CD8-positive, alpha-beta T cell (primary cell): ENCODE measurements at regions of chr2 and their contacts with region 1.

Region 1: DNA sequence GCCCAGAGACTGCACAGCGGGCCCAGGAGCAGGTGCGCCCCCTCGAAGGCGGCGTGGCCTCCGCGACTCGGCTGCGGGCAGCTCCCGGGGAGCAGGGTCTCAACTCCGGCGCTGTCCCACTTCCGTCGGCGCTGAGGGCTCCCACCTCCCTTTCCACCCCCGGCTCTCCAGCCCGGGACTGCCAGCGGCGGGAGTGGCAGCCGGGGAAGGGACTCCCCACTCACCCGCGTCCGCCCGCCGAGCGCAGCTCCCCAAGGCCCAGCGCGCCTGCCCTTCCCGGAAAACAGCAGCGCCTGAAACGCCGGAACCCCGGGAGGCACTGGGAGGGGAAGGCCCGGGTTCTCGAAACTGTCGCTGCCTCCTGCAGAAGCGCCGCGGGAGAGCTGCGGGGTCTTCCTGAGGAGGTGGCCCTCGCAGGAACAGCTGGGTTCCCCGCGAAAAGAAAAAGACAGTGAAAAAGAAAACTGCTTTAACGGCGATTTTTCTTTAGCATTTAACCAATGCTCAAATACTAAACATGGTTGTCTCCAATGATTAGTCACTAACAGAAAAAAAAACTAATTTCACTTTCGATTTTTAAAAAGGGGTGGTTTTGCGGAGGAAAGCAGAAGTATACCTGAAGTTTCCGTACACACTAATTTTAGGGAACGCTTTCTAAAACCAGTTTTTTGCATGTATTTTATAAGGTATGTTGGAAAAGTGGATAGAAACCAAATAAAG is at the start of gene NMI:
- DNase-seq: peak; percentile 30 to 82 (median 64)
- ATAC-seq: peak; percentile 68
- H3K4me3 ChIP-seq: peak within 1 kb of the TSS; percentile 89 to 92
- H3K4me3 Mint-ChIP-seq: peak within 1 kb of the TSS; percentile 95
- H3K27ac ChIP-seq: peak within 1 kb of the TSS; percentile 92 to 97
- H3K27ac Mint-ChIP-seq: peak within 1 kb of the TSS; percentile 99
- H3K4me1 ChIP-seq: peaks cover 31% of the 10 kb centered on the region
- H3K4me1 Mint-ChIP-seq: peaks cover 46% of the 10 kb centered on the region
- H3K27me3 ChIP-seq: no peaks in the 10 kb centered on the region
- H3K27me3 Mint-ChIP-seq: no peaks in the 10 kb centered on the region
- CTCF ChIP-seq: no peak
- total RNA-seq, gene NMI: 16.9 to 18.0 TPM

Region 2: DNA sequence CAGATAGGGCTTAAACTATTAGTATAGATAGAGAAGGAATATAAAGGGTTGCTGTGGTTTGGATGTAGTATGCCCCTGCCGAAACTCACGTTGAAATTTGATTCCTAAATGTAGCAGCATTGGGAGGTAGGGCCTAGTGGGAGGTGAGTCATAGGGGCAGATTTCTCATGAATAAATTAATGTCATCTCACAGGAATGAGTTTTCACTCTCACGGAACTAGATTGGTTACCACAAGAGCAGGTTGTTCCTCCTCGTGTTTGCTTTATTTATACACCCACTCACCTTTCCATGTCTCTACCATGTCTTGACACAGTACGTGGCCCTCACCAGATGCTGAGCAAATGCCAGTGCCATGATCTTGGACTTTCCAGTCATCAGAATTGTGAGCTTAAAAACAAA is 246.0 kb before region 1 on chr2:
- CTCF ChIA-PET with region 1: no interaction called
- POLR2A ChIA-PET with region 1: no interaction called
- intact Hi-C with region 1: no loop called
- DNase-seq: no peak
- ATAC-seq: no peak
- H3K4me3 ChIP-seq: no peak overlapping the region
- H3K4me3 Mint-ChIP-seq: no peak overlapping the region
- H3K27ac ChIP-seq: no peak overlapping the region
- H3K27ac Mint-ChIP-seq: no peak overlapping the region
- H3K4me1 ChIP-seq: no peaks in the 10 kb centered on the region
- H3K4me1 Mint-ChIP-seq: no peaks in the 10 kb centered on the region
- H3K27me3 ChIP-seq: no peaks in the 10 kb centered on the region
- H3K27me3 Mint-ChIP-seq: peaks cover 12% of the 10 kb centered on the region
- CTCF ChIP-seq: no peak

Region 3: DNA sequence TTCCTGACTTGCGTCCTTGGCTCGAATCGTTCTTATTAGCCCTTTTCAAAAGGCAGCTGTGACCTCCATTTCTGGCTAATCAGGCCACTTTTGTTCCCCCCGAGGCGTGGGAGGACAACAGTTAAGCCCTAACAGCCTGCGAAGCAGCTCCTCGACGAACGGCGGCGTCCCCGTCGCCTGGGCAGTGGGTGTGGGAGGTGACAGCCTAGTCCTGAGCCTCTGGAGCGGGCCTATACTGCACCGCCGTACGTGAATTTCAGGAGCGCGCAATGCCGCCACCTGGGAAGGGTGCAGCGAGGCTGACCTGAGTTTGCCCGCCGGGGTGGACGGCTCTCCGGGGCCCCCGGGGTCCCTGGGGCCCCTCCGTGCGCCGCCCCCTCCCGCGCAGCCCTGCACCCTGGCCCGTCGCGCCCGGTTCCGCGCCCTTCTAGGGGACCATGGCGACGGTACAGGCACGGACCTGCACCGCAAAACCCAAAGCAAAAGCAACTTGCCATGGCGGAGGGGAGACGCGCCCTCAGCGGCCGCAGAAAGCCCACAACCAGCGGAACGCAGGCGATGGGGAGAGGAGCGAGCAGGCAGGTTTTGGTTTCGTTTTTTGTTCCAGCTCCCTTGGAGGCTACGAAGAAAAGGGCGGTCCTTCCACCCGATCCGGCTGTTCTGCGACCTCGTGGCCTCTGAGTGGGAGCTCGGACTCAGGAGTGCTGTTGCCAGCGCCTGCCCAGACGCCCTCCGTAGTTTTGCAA is 28.1 kb before region 1 on chr2 and contains the start of gene RBM43:
- CTCF ChIA-PET with region 1: interaction called, 3 read pairs
- POLR2A ChIA-PET with region 1: interaction called, 52 read pairs
- intact Hi-C with region 1: loop called (anchors 1 kb)
- DNase-seq: peak; percentile 60 to 94 (median 82)
- ATAC-seq: peak; percentile 87
- H3K4me3 ChIP-seq: peak within 1 kb of the TSS; percentile 68
- H3K4me3 Mint-ChIP-seq: peak within 1 kb of the TSS; percentile 90
- H3K27ac ChIP-seq: peak within 1 kb of the TSS; percentile 91 to 96
- H3K27ac Mint-ChIP-seq: peak within 1 kb of the TSS; percentile 98
- H3K4me1 ChIP-seq: peaks cover 5% of the 10 kb centered on the region
- H3K4me1 Mint-ChIP-seq: peaks cover 38% of the 10 kb centered on the region
- H3K27me3 ChIP-seq: no peaks in the 10 kb centered on the region
- H3K27me3 Mint-ChIP-seq: no peaks in the 10 kb centered on the region
- CTCF ChIP-seq: no peak
- total RNA-seq, gene RBM43: 12.1 to 12.4 TPM